GM10248 (cell line): ENCODE measurements at regions of chr17 and their contacts with region 1.

Region 1: DNA sequence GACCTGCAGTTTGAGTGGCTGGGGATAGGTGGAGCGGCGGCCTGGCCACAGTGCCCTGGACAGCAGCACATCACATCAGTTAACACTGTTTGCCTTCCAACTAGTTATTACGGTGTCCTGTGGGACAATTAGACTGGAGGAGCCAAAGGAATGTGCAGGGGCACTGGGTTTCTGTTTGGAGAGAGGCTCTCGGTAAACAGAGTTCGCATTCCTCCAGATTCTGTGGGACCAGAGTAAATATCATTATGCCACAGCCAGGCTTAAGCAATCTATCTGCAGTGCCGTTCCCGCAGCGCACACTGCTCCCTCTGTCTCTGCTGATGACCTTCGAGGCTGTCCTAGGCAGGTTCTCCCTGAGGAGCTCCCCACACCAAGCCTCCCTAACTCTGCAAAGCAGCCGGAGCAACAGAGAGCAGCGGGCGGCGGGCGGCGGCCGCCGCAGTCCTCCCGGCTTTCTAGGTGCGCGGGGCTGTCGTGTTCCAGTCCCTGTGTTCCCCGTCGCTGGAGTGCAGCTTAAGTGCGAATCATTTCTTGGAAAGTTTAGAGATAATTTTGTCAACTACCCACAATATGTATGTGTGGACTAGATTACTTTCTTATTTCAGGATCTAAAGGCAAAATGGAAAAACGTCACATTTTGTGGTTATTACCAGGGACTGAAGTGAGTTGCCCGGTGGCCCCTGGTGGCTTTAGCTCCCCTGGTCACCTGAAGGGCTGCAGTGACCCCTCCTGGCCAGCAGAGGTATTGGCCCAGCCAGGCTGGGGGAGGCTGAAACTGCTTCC is 43.2 kb downstream of the PGS1 start:
- DNase-seq: peak; percentile 88
- CTCF ChIP-seq: peak; percentile 98

Region 2: DNA sequence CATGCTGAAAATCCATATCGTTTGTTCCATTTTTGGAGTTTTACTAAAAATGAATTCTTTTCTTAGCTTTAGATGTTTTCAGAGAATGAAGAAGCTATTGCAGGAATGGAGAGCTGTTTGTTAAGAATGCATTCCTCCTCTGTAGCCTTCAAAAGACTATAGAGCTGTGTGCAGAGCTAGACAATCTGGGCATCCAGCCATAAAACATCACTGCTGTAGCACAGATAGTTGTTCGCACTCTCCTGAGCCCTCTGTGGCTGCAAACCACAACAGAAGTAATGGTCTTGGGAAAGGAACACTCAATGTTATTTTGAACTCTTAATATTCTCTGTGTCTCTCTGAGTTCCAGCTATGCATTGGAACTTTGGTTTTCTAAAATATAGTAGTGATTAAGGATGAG is 458.2 kb before region 1 on chr17:
- CTCF ChIA-PET with region 1: no interaction called
- POLR2A ChIA-PET with region 1: no interaction called
- DNase-seq: no peak
- CTCF ChIP-seq: no peak

Region 3: GRCh38 chr17:78289802-78290363 is 131.8 kb before region 1 on chr17:
- CTCF ChIA-PET with region 1: interaction called, 24 read pairs
- POLR2A ChIA-PET with region 1: no interaction called
- DNase-seq: peak; percentile 84
- CTCF ChIP-seq: peak; percentile 82

Region 4: GRCh38 chr17:78324391-78325075 is 97.1 kb before region 1 on chr17:
- CTCF ChIA-PET with region 1: no interaction called
- POLR2A ChIA-PET with region 1: no interaction called
- DNase-seq: peak; percentile 41
- CTCF ChIP-seq: no peak

Region 5: GRCh38 chr17:78390241-78391050 is 31.2 kb before region 1 on chr17:
- CTCF ChIA-PET with region 1: interaction called, 19 read pairs
- POLR2A ChIA-PET with region 1: no interaction called
- DNase-seq: no peak
- CTCF ChIP-seq: no peak

Region 6: GRCh38 chr17:78432226-78433012 is 10.7 kb after region 1 on chr17:
- CTCF ChIA-PET with region 1: interaction called, 14 read pairs
- POLR2A ChIA-PET with region 1: no interaction called
- DNase-seq: no peak
- CTCF ChIP-seq: no peak